Heart right ventricle (tissue), 16 donors: ENCODE measurements at regions of chr18 and their contacts with region 1.

Region 1: DNA sequence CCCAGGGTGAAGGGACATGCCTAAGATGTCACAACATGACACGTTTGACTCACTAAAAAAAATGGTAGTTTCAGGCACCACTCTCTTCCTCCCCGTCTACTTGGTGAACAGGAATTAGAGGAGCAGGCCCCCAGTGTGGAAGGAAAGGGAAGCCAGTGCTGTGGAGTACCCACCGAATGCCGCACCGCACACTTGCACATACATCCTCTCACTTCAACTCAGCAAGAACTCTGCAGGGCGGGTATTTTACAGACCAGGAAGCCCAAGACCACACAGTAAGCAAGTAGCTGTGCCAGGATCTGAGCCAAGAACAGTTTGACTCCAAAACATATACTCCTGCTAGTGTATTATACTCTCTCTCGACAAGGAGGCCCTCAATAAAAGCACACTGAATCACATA is 69.8 kb downstream of the BCL2 start:
- DNase-seq: no peak
- ATAC-seq: peak in 6 of 8 donors; percentile 23 to 73 (median 40)
- H3K4me3 ChIP-seq: no peak overlapping the region
- H3K27ac ChIP-seq: peak overlapping the region in 1 of 10 donors; percentile 61
- H3K4me1 ChIP-seq: peaks cover 0 to 55% (median 7%) of the 10 kb centered on the region in 9 donors
- H3K27me3 ChIP-seq: no peaks in the 10 kb centered on the region
- CTCF ChIP-seq: no peak

Region 2: DNA sequence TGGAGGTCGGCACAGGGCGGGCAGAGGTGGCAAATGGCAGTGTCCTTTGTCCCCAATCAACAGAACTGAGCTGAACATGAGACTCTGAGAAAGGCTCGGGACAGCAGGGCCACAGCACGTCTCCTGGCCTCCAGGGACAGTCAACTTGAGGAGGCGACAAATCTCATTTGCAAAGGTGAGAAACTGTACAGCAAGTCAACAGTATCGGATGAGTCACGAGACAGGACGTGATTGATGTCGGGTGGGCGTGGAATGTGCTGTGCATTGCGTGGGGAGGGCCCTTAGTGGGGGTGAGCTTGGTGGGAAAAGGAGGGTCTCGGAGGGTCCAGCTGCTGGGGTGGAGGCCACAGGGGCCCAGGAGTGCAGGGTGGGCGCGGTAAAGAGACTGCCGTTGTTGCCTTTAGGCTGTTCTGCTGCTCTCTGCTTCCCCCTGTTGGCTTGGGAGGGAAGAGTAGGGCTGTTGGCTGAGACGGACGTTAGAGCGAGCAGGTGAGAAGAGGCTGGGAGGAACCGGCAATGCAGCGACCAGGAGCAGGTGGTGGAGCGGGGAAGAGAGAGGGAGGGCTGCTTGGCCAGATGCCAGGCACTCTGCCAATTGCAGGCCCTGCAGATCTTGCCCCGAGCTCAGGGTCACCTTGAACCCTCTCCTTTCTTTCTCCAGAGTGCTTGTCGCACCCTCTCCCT is 94.5 kb before region 1 on chr18:
- intact Hi-C with region 1: loop called in 2 of 10 experiments (anchors 10 kb)
- DNase-seq: peak; percentile 52 to 72
- ATAC-seq: peak; percentile 69 to 90 (median 86)
- H3K4me3 ChIP-seq: peak overlapping the region in 9 of 10 donors; percentile 20 to 48 (median 38)
- H3K27ac ChIP-seq: peak overlapping the region in 1 of 10 donors; percentile 86
- H3K4me1 ChIP-seq: peaks cover under 1 to 41% (median 14%) of the 10 kb centered on the region in 9 donors
- H3K27me3 ChIP-seq: no peaks in the 10 kb centered on the region
- CTCF ChIP-seq: peak; percentile 66 to 87 (median 78)

Region 3: GRCh38 chr18:63284827-63285733 is 35.3 kb after region 1 on chr18:
- intact Hi-C with region 1: loop called in 1 of 10 experiments (anchors 5 kb)
- DNase-seq: no peak
- ATAC-seq: no peak
- H3K4me3 ChIP-seq: no peak overlapping the region
- H3K27ac ChIP-seq: no peak overlapping the region
- H3K4me1 ChIP-seq: peaks cover 0 to 38% (median 24%) of the 10 kb centered on the region in 9 donors
- H3K27me3 ChIP-seq: no peaks in the 10 kb centered on the region
- CTCF ChIP-seq: no peak